Activated CD4-positive, alpha-beta T cell treated with anti-CD3 and anti-CD28 coated beads for 36 hours (primary cell): ENCODE measurements at regions of chr1 and their contacts with region 1.

Region 1: GRCh38 chr1:66436378-66437145 is 97.4 kb upstream of the SGIP1 start:
- DNase-seq: peak; percentile 77
- ATAC-seq: peak; percentile 97
- H3K4me3 Mint-ChIP-seq: no peak overlapping the region
- H3K27ac Mint-ChIP-seq: peak overlapping the region; percentile 58
- H3K4me1 Mint-ChIP-seq: peaks cover 39% of the 10 kb centered on the region
- H3K27me3 Mint-ChIP-seq: no peaks in the 10 kb centered on the region

Region 2: DNA sequence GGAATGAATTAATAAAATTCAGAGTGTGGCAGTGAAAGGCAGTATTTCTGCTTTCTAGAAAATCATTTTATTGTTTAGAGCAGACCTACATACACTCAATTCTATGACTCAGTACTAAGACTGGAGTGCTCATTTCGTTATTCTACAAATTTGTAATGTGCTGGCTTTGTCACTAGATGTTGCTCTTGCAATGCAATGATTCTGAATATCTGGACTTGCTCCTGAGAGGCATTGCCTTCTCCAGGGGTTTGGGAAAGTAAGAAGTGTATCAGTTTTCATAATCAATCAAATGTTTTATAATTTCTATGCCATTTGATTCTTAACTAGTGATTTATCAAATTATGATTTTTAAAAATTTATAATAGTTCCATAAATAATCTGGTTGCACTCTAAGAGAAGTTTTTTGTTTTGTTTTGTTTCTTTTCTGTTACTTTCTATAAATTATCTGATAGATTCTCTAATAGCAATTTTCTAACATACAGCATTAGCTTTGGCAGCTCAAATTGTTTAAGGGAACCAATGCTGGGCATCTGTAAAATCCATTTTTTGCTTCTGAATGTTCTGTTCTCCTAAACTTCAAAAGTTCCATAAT is 183.1 kb before region 1 on chr1:
- CTCF ChIA-PET with region 1: interaction called, 359 read pairs
- POLR2A ChIA-PET with region 1: no interaction called
- intact Hi-C with region 1: loop called in 1 of 2 experiments (anchors 1 kb)
- DNase-seq: no peak
- ATAC-seq: peak; percentile 81
- H3K4me3 Mint-ChIP-seq: no peak overlapping the region
- H3K27ac Mint-ChIP-seq: no peak overlapping the region
- H3K4me1 Mint-ChIP-seq: peaks cover 49% of the 10 kb centered on the region
- H3K27me3 Mint-ChIP-seq: no peaks in the 10 kb centered on the region

Region 3: DNA sequence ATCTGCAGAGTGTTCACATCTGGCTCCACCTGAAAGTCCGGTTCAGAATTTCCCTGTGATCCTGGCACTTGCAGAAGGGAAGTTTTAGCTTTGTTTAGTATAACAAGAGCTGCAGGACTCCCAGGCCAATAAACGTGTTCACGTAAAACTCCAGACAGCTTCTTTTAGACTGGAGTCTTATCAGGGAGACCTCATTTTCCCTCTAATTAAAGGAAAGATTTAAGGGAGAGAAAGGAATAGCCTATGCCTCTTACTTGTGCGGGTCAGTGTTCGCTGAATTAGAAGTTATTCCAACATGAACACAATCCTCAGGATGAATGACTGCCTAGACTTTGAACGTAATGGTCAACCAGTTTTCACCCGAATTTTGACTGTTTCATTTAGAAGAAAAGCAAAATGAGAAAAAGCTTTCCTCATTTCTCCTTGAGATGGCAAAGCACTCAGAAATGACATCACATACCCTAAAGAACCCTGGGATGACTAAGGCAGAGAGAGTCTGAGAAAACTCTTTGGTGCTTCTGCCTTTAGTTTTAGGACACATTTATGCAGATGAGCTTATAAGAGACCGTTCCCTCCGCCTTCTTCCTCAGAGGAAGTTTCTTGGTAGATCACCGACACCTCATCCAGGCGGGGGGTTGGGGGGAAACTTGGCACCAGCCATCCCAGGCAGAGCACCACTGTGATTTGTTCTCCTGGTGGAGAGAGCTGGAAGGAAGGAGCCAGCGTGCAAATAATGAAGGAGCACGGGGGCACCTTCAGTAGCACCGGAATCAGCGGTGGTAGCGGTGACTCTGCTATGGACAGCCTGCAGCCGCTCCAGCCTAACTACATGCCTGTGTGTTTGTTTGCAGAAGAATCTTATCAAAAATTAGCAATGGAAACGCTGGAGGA is 104.7 kb before region 1 on chr1:
- CTCF ChIA-PET with region 1: interaction called, 23 read pairs
- POLR2A ChIA-PET with region 1: no interaction called
- intact Hi-C with region 1: no loop called
- DNase-seq: peak; percentile 75
- ATAC-seq: peak; percentile 40
- H3K4me3 Mint-ChIP-seq: peak overlapping the region; percentile 91
- H3K27ac Mint-ChIP-seq: peak overlapping the region; percentile 98
- H3K4me1 Mint-ChIP-seq: peaks cover 44% of the 10 kb centered on the region
- H3K27me3 Mint-ChIP-seq: no peaks in the 10 kb centered on the region

Region 4: GRCh38 chr1:66350001-66350547 is 86.5 kb before region 1 on chr1:
- CTCF ChIA-PET with region 1: interaction called, 27 read pairs
- POLR2A ChIA-PET with region 1: interaction called, 8 read pairs
- intact Hi-C with region 1: loop called in 1 of 2 experiments (anchors 5 kb)
- DNase-seq: peak; percentile 78
- ATAC-seq: peak; percentile 59
- H3K4me3 Mint-ChIP-seq: peak overlapping the region; percentile 57
- H3K27ac Mint-ChIP-seq: peak overlapping the region; percentile 88
- H3K4me1 Mint-ChIP-seq: peaks cover 93% of the 10 kb centered on the region
- H3K27me3 Mint-ChIP-seq: no peaks in the 10 kb centered on the region

Region 5: DNA sequence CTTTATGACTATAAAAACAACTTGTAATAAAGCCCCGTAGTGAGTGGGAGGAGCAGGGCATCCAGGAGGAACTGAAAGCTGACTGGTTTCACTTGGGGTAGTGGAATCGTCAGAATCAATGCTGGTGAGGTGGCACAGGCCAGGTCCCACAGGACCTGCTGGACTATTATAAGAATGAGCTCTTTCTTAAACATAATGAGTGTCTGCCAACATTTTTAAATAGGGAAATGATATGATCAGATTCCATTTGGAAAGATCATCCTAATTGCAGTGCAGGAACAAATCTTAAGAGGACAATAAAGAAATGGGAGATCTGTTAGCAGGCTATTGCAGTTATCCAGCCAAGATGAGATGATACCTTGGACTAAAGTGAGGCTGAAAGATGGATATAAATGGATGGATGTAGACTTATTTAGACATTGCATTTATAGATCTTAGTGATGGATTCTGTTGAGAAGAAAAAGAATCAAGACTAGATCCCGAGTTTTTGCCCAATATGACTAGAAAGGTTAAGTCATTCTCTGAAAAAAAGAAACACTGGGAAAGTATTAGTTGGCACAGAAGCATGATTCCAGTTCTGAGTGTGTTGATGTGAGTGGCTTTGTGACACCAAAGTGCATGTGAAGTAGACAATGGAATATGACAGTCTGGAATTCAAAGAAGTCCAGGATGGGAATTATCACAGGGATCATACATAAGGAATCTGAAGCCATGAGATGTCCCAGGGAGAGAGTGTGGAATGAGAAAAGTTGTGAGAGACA is 55.9 kb before region 1 on chr1:
- CTCF ChIA-PET with region 1: interaction called, 26 read pairs
- POLR2A ChIA-PET with region 1: interaction called, 7 read pairs
- intact Hi-C with region 1: loop called in 1 of 2 experiments (anchors 1 kb)
- DNase-seq: peak; percentile 57
- ATAC-seq: peak; percentile 80
- H3K4me3 Mint-ChIP-seq: no peak overlapping the region
- H3K27ac Mint-ChIP-seq: no peak overlapping the region
- H3K4me1 Mint-ChIP-seq: peaks cover 50% of the 10 kb centered on the region
- H3K27me3 Mint-ChIP-seq: no peaks in the 10 kb centered on the region

Region 6: DNA sequence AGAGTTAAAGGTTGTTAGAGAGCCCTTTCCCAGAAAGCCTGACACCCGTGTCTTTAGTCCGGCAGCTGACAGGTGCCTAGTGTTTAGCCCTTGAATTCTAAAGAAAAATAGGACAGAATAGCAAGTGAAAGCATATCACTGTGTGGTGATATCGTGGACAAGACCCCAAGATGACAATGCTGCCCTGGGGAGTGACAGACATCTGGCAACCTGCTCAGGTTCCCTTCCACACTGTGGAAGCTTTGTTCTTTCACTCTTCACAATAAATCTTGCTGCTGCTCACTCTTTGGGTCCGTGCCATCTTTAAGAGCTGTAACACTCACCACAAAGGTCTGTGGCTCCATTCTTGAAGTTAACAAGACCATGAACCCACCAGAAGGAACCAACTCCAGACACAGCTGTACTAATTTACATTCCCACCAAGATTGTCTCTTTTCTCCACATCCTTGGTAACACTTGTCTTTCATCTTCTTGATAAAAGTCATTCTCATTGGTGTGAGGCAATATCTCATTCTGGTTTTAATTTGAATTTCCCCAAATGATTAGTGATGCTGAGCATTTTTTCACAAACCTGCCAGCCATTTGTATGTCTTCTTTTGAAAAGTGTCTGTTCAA is 10.2 kb before region 1 on chr1:
- CTCF ChIA-PET with region 1: interaction called, 13 read pairs
- POLR2A ChIA-PET with region 1: no interaction called
- intact Hi-C with region 1: no loop called
- DNase-seq: no peak
- ATAC-seq: peak; percentile 60
- H3K4me3 Mint-ChIP-seq: no peak overlapping the region
- H3K27ac Mint-ChIP-seq: peak overlapping the region; percentile 23
- H3K4me1 Mint-ChIP-seq: peaks cover 7% of the 10 kb centered on the region
- H3K27me3 Mint-ChIP-seq: no peaks in the 10 kb centered on the region